Natural killer cell (primary cell): ENCODE measurements at regions of chr2 and their contacts with region 1.

Region 1: DNA sequence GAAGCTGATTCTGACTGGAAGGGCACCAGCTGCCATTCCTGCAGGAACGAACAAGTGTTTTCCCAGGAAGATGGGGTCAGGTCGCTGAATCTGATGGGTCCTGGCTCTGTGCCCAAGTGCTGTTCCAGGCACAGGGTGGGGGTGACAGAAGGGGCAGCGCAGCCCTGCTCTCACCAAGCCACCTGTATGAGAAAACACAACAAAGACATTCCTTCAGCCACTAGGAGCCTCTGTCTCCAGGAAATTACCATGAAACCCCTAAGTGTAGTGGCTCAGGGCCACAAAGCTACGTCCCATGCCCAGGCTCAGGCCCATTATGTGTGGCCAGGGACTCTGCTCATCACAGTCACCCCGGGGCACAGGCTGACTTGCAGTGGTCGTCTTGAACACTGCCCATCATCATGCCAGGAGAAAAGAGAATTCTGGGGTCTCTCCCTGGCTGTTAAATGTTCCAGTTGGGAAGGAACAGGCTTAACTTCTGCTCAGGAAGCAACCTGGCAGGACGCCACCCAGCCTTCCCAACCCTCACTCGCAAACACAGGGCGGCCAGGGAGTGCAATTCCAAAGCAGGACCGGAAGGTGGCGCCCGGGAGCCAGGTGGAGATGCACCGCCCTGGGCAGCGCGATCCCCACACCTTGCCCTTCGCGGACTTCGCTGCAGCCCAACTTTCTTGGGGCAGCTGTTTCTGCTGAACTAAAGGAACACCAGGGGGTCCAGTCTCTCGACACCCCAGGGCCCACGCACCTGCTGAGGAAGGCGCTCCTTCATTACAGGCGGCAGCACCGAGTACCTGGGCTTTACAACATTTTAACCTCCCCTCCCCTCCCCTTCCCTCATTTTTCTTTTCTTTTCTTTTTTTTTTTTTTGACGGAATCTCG is 11.0 kb upstream of the SFTPB start:
- DNase-seq: peak; percentile 80 to 85
- ATAC-seq: peak; percentile 95 to 99 (median 97)
- H3K4me3 ChIP-seq: no peak overlapping the region
- H3K4me3 Mint-ChIP-seq: peak overlapping the region; percentile 22
- H3K27ac ChIP-seq: no peak overlapping the region
- H3K27ac Mint-ChIP-seq: peak overlapping the region in 1 of 2 donors; percentile 13
- H3K4me1 ChIP-seq: peaks cover 49% of the 10 kb centered on the region
- H3K4me1 Mint-ChIP-seq: peaks cover 24 to 27% of the 10 kb centered on the region in 2 donors
- H3K27me3 ChIP-seq: no peaks in the 10 kb centered on the region
- H3K27me3 Mint-ChIP-seq: peaks cover 0 to 4% of the 10 kb centered on the region in 2 donors
- CTCF ChIP-seq: peak; percentile 96

Region 2: DNA sequence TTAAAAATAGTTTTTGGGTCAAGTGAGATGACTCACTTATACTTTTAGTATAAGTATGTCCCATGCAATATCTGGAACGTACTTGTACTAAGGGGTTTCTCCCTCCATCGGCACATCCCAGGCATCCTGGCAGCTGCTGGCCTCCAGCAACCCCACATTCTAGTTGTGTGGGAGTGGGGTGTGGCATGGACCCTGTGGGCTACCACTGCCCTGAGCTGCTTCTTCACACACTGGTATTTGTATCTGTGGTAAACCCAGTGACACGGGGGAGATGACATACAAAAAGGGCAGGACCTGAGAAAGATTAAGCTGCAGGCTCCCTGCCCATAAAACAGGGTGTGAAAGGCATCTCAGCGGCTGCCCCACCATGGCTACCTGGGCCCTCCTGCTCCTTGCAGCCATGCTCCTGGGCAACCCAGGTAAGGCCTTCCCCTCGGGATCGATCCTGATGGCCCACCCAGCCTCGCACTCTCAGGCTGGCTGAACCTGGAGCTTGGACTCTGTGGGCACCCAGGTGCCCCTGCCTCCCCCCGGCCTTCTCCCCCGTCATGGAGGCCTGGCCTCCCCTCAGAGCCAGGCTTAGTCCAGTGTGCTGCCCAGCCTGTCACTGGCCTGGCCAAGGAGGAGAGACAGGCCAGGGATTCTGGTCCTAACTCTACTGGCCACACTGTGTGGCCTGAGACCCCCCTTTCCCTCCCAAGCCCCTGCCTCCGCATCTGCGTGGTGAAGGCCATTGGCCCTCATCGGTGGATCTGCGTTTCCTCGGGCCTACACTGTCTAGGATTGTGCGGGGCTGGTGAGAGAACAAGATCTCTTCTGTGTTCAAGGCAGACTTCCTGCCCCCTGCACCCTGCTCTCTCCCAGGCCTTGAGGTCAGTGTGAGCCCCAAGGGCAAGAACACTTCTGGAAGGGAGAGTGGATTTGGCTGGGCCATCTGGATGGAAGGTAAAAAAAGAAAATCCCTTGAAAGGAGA is 15.3 kb after region 1 on chr2 and contains the start of gene GNLY:
- intact Hi-C with region 1: loop called (anchors 2 kb)
- DNase-seq: peak; percentile 53 to 77
- ATAC-seq: peak; percentile 57 to 87 (median 79)
- H3K4me3 ChIP-seq: peak within 1 kb of the TSS; percentile 76
- H3K4me3 Mint-ChIP-seq: peak within 1 kb of the TSS; percentile 97
- H3K27ac ChIP-seq: peak within 1 kb of the TSS; percentile 85
- H3K27ac Mint-ChIP-seq: peak within 1 kb of the TSS; percentile 95 to 96
- H3K4me1 ChIP-seq: peaks cover 67% of the 10 kb centered on the region
- H3K4me1 Mint-ChIP-seq: peaks cover 74 to 80% of the 10 kb centered on the region in 2 donors
- H3K27me3 ChIP-seq: no peaks in the 10 kb centered on the region
- H3K27me3 Mint-ChIP-seq: no peaks in the 10 kb centered on the region
- CTCF ChIP-seq: no peak
- total RNA-seq, gene GNLY: 4,938 to 8,199 (median 6,542) TPM

Region 3: GRCh38 chr2:85728883-85729824 is 50.1 kb after region 1 on chr2:
- intact Hi-C with region 1: loop called (anchors 5 kb)
- DNase-seq: peak; percentile 72 to 80
- ATAC-seq: peak; percentile 86 to 97 (median 96)
- H3K4me3 ChIP-seq: no peak overlapping the region
- H3K4me3 Mint-ChIP-seq: no peak overlapping the region
- H3K27ac ChIP-seq: no peak overlapping the region
- H3K27ac Mint-ChIP-seq: peak overlapping the region in 1 of 2 donors; percentile 11
- H3K4me1 ChIP-seq: peaks cover 12% of the 10 kb centered on the region
- H3K4me1 Mint-ChIP-seq: peaks cover 8 to 12% of the 10 kb centered on the region in 2 donors
- H3K27me3 ChIP-seq: no peaks in the 10 kb centered on the region
- H3K27me3 Mint-ChIP-seq: peaks cover 7 to 8% of the 10 kb centered on the region in 2 donors
- CTCF ChIP-seq: peak; percentile 87